Esophagus squamous epithelium (tissue), 5 donors: ENCODE measurements at regions of chr1 and their contacts with region 1.

Region 1: DNA sequence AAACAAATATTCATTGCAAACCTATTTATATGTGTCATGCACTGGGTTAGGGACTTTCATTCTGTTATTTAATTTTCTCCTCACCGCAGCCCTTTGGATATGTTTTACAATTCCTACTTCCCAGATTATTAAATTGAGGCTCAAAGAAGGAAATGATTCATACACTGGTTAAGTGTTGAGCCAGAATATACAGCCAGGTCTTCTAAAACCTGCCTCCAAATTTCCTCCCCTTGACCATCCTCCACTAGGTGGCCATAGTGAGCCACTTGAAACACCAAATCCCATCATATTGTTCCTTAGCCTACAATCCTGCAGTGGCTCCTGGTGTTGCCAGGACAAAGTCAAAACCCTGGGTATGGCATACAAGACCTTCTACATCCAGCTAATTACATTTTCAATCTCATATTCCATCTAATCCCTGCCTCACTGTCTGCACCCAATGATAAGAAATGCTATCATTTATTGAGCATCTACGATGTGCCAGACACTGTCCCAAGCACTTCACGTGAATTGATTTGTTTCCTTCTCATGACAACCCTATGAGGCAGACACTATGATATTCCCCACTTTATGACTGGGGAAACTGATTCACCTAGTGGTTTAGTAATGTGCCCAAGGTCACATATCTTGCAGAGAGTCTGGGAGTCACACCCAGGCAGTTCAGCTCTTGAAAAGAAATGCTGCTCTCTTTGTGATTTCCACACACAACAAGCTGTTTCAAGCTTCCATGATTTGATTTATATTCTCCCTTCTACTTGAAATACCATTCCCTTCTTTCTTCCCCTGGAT is 23.6 kb upstream of the KIRREL1 start:
- DNase-seq: no peak
- H3K4me3 ChIP-seq: no peak overlapping the region
- H3K27ac ChIP-seq: no peak overlapping the region
- H3K4me1 ChIP-seq: peaks cover 0 to 15% (median 14%) of the 10 kb centered on the region in 3 donors
- H3K27me3 ChIP-seq: no peaks in the 10 kb centered on the region
- CTCF ChIP-seq: peak; percentile 56 to 78 (median 61)
- POLR2A ChIP-seq: no peak

Region 2: GRCh38 chr1:158117854-158118704 is 148.2 kb after region 1 on chr1:
- intact Hi-C with region 1: loop called (anchors 5 kb)
- DNase-seq: no peak
- H3K4me3 ChIP-seq: peak overlapping the region in 3 of 4 donors; percentile 17 to 48 (median 22)
- H3K27ac ChIP-seq: no peak overlapping the region
- H3K4me1 ChIP-seq: peaks cover 8 to 19% (median 15%) of the 10 kb centered on the region in 3 donors
- H3K27me3 ChIP-seq: peaks cover 0 to 82% (median 0%) of the 10 kb centered on the region in 4 donors
- CTCF ChIP-seq: peak; percentile 13 to 58 (median 37)
- POLR2A ChIP-seq: no peak